ENCODE measurements at regions of chr7 and their contacts with region 1.

Region 1: DNA sequence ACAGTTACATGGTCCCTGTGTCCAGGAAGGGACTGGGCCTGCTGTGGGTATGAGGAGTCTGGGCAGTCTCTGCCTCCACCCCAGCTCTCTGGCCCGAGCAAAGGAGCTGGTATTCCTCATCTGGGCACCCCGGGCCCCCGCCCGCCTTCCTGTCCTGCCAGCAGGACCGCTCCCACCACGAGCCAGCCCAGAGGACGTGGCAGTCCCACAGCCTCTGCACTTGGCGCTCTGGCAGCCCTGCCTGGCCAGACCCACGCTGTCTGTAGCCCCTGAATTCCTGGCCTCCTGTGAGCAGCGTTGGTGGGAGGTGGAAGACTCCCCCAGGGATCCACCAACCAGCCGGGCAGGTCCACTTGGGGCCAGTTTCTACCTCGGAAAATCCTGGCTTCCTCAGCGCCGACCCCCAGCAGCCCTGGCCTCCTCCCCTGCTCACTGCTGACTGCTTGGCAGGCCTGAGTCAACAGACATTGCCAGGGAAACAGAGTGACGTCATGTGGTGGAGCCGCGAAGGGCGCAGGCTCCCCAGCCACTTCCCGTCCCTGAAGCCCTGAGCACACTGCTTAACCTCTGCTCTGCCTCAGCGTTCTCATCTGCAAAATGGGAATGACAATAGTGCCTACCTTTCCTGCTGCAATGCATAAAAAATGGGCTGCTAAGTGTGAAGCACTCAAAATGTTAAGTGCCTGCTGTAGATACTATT is 21.6 kb upstream of the LIMK1 start:
- DNase-seq: peak; percentile 87 to 90 (median 89)
- ATAC-seq: peak; percentile 84
- H3K4me3 ChIP-seq: no peak overlapping the region
- H3K4me1 ChIP-seq: peaks cover 28% of the 10 kb centered on the region
- CTCF ChIP-seq: no peak

Region 2: DNA sequence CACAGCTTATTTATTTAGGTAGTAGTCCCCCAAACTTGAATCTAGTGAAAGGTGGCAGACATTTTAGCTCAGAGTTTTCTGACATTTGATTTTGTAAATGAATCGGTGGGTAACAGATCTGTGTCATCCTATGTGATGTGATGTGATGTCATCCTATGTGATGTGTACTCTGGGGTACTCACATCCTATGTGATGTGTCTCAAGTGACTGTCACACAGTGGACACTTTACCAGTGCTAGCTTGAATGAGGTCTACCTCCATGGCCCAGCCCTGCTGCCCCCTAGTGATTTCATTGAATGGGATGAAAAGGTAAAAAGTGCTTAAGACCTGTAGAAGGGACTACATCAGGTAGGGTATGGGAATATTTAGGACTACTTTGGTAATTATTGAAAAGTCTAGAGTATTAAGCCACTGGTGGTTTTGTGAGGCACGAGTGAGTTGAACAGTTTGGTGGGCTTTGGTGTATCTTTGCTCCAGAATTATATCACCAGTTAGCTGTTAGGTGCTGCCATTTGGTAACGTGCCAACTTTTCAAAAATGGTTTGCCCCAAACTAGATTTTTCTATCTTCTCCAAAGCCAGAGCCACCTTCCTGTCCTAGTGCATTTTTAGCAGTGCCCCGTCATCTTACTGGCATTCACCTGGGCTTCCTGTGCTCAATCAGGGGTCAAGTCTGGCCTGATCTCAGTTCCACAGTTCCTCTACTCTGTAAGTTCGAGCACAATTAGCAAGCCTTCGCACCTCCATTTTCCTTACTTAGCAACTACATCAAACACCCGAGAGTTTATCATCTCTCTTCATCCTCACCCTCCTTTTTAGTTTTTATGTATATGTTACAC is 121.8 kb after region 1 on chr7:
- intact Hi-C with region 1: loop called in 1 of 2 experiments (anchors 10 kb)
- DNase-seq: peak in 1 of 3 donors; percentile 67
- ATAC-seq: peak; percentile 60
- H3K4me3 ChIP-seq: no peak overlapping the region
- H3K4me1 ChIP-seq: peaks cover 69% of the 10 kb centered on the region
- CTCF ChIP-seq: no peak

Measured in mucosa of descending colon (tissue), 3 donors.